ENCODE measurements at regions of chr12 and their contacts with region 1.

Region 1: GRCh38 chr12:113049976-113050742 is 6.4 kb upstream of the DTX1 start:
- DNase-seq: peak; percentile 69
- H3K4me3 ChIP-seq: no peak overlapping the region
- H3K27ac ChIP-seq: no peak overlapping the region
- H3K4me1 ChIP-seq: no peaks in the 10 kb centered on the region
- H3K27me3 ChIP-seq: no peaks in the 10 kb centered on the region
- CTCF ChIP-seq: peak in 1 of 3 experiments; percentile 18
- POLR2A ChIP-seq: no peak

Region 2: DNA sequence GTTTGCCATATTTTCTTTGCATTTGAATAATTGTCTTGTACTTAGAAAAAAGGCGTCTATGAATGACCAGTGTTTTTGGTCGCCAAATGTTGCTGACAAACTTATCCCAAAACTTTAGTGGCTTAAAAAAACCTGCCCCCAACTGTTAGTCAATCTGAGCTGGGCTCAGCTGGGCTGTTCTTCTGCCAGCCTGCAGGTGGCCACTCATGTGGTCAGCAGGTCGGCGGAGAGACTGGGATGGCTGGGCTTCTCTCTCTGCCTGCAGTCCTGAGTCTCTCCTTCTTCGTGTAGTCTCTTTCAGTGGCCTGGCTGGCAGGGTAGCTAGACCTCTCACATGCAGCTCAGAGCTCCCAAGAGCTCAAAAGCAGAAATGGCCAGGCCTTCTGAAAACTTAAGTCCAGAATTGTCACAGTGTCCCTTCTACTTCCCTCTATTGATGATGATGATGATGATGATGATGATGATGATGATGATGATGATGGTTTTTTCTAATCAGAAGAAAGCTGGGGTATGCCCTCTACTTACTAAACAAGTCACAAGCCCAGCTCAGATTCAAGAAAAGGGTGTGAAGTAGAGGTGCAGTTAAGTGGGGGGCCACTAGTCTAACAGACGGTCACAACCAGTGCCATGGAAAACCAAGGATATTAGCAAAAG is 543.5 kb before region 1 on chr12:
- intact Hi-C with region 1: no loop called
- DNase-seq: no peak
- H3K4me3 ChIP-seq: no peak overlapping the region
- H3K27ac ChIP-seq: no peak overlapping the region
- H3K4me1 ChIP-seq: no peaks in the 10 kb centered on the region
- H3K27me3 ChIP-seq: no peaks in the 10 kb centered on the region
- CTCF ChIP-seq: no peak
- POLR2A ChIP-seq: no peak

Region 3: DNA sequence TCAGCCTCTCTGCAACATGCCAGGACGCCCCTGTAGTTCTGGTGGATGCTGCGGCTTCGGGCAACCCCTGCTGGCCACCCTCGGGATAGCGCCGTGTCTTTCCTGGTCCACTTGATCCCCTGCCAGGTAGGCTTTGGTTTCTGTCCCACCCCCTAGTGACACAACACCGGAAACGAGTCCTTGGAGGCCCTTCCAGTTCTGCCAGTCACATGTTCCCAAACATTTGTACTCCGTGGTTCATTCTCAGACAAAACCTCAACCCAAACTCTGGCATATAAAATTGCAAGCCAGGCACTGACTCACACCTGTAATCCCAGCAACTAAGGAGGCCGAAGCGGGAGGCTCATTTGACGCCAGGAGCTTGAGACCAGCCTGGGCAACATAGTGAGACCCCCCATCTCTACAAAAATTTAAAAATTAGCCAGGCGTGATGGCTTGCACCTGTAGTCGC is 48.3 kb after region 1 on chr12:
- intact Hi-C with region 1: loop called (anchors 5 kb)
- DNase-seq: peak; percentile 89
- H3K4me3 ChIP-seq: no peak overlapping the region
- H3K27ac ChIP-seq: no peak overlapping the region
- H3K4me1 ChIP-seq: peaks cover 4% of the 10 kb centered on the region
- H3K27me3 ChIP-seq: no peaks in the 10 kb centered on the region
- CTCF ChIP-seq: peak; percentile 90 to 95 (median 94)
- POLR2A ChIP-seq: no peak

Region 4: GRCh38 chr12:113152835-113153814 is 103.0 kb after region 1 on chr12:
- intact Hi-C with region 1: loop called (anchors 10 kb)
- DNase-seq: peak; percentile 80
- H3K4me3 ChIP-seq: peak overlapping the region; percentile 32 to 41
- H3K27ac ChIP-seq: no peak overlapping the region
- H3K4me1 ChIP-seq: no peaks in the 10 kb centered on the region
- H3K27me3 ChIP-seq: no peaks in the 10 kb centered on the region
- CTCF ChIP-seq: peak in 1 of 3 experiments; percentile 35
- POLR2A ChIP-seq: no peak

Measured in testis (tissue), 5 donors.